CD14-positive monocyte (primary cell): ENCODE measurements at regions of chr1 and their contacts with region 1.

Region 1: GRCh38 chr1:222620566-222620965 is 2.7 kb downstream of the MIA3 start:
- DNase-seq: no peak
- H3K4me3 ChIP-seq: no peak overlapping the region
- H3K4me3 Mint-ChIP-seq: no peak overlapping the region
- H3K27ac ChIP-seq: no peak overlapping the region
- H3K27ac Mint-ChIP-seq: no peak overlapping the region
- H3K4me1 ChIP-seq: peaks cover 15 to 19% of the 10 kb centered on the region in 2 donors
- H3K4me1 Mint-ChIP-seq: peaks cover 21% of the 10 kb centered on the region
- H3K27me3 ChIP-seq: peaks cover 2 to 16% of the 10 kb centered on the region in 2 donors
- H3K27me3 Mint-ChIP-seq: peaks cover 2 to 7% (median 6%) of the 10 kb centered on the region in 3 donors
- CTCF ChIP-seq: no peak

Region 2: GRCh38 chr1:222589462-222590302 is 30.9 kb before region 1 on chr1 and contains the start of gene TAF1A:
- intact Hi-C with region 1: loop called in 1 of 2 experiments (anchors 5 kb)
- DNase-seq: peak; percentile 68 to 81 (median 80)
- H3K4me3 ChIP-seq: peak within 1 kb of the TSS; percentile 65 to 86 (median 83)
- H3K4me3 Mint-ChIP-seq: peak within 1 kb of the TSS; percentile 95 to 99
- H3K27ac ChIP-seq: peak within 1 kb of the TSS; percentile 74 to 90
- H3K27ac Mint-ChIP-seq: peak within 1 kb of the TSS; percentile 95 to 99 (median 98)
- H3K4me1 ChIP-seq: peaks cover 12 to 15% of the 10 kb centered on the region in 2 donors
- H3K4me1 Mint-ChIP-seq: peaks cover 20% of the 10 kb centered on the region
- H3K27me3 ChIP-seq: no peaks in the 10 kb centered on the region
- H3K27me3 Mint-ChIP-seq: peaks cover 0 to 2% (median 2%) of the 10 kb centered on the region in 3 donors
- CTCF ChIP-seq: no peak
- polyA plus RNA-seq, gene TAF1A: 1.3 to 5.1 (median 2.5) TPM

Region 3: GRCh38 chr1:222697826-222698225 is 77.3 kb after region 1 on chr1:
- intact Hi-C with region 1: no loop called
- DNase-seq: no peak
- H3K4me3 ChIP-seq: no peak overlapping the region
- H3K4me3 Mint-ChIP-seq: no peak overlapping the region
- H3K27ac ChIP-seq: no peak overlapping the region
- H3K27ac Mint-ChIP-seq: no peak overlapping the region
- H3K4me1 ChIP-seq: no peaks in the 10 kb centered on the region
- H3K4me1 Mint-ChIP-seq: no peaks in the 10 kb centered on the region
- H3K27me3 ChIP-seq: no peaks in the 10 kb centered on the region
- H3K27me3 Mint-ChIP-seq: no peaks in the 10 kb centered on the region
- CTCF ChIP-seq: no peak